CD4-positive, alpha-beta memory T cell (primary cell): ENCODE measurements at regions of chr9 and their contacts with region 1.

Region 1: DNA sequence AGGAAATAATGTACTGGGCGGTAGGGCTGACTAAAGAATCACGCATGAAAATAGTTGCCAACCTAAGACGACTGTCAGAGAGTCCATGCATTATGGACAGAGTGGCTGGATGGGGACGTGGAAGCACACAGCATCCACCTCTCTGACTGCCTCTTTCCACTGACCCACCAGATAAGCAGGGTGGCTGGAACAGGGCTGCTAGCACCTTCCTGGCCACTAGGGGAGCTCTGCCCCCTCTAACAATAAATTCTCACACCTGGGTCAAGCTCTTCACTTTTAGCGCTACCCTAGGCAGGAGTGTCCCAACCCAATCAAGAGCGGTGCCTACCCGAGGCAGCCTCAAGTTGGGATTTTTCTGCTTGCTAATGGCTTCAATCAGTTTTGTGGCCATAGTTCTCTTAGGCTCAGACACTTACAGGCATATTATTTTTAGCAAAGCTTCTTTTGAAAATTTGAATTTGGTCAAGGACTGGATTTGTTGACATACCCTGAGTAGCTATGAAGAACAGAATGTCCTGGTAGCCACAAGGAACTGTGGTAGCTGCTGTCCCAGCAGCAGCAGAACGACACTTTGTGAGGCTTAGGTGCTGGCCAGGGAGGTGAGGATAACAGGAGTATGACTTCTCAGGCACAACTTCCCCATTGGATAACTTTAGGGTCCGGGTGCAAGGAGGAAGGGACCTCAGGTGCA is 6.9 kb upstream of the TPM2 start:
- DNase-seq: peak in 4 of 5 donors; percentile 42 to 61 (median 52)
- H3K4me3 ChIP-seq: no peak overlapping the region
- H3K4me3 Mint-ChIP-seq: no peak overlapping the region
- H3K27ac ChIP-seq: no peak overlapping the region
- H3K27ac Mint-ChIP-seq: peak overlapping the region; percentile 35 to 89 (median 79)
- H3K4me1 ChIP-seq: peaks cover 9% of the 10 kb centered on the region
- H3K4me1 Mint-ChIP-seq: peaks cover 7 to 15% (median 12%) of the 10 kb centered on the region in 4 donors
- H3K27me3 ChIP-seq: no peaks in the 10 kb centered on the region
- H3K27me3 Mint-ChIP-seq: no peaks in the 10 kb centered on the region

Region 2: GRCh38 chr9:35611230-35611797 is 85.4 kb before region 1 on chr9:
- CTCF ChIA-PET with region 1: interaction called, 85 read pairs
- POLR2A ChIA-PET with region 1: interaction called, 7 read pairs
- intact Hi-C with region 1: loop called (anchors 2 kb)
- DNase-seq: peak; percentile 45 to 63 (median 49)
- H3K4me3 ChIP-seq: no peak overlapping the region
- H3K4me3 Mint-ChIP-seq: peak overlapping the region in 1 of 8 donors; percentile 26
- H3K27ac ChIP-seq: no peak overlapping the region
- H3K27ac Mint-ChIP-seq: peak overlapping the region in 5 of 7 donors; percentile 4 to 83 (median 59)
- H3K4me1 ChIP-seq: peaks cover 19% of the 10 kb centered on the region
- H3K4me1 Mint-ChIP-seq: peaks cover 13 to 43% (median 20%) of the 10 kb centered on the region in 4 donors
- H3K27me3 ChIP-seq: no peaks in the 10 kb centered on the region
- H3K27me3 Mint-ChIP-seq: no peaks in the 10 kb centered on the region

Region 3: GRCh38 chr9:35646533-35647265 is 50.0 kb before region 1 on chr9:
- CTCF ChIA-PET with region 1: interaction called, 145 read pairs
- POLR2A ChIA-PET with region 1: interaction called, 159 read pairs
- intact Hi-C with region 1: loop called (anchors 1 kb)
- DNase-seq: peak; percentile 91 to 95 (median 91)
- H3K4me3 ChIP-seq: peak overlapping the region; percentile 78 to 96
- H3K4me3 Mint-ChIP-seq: peak overlapping the region; percentile 93 to 98 (median 94)
- H3K27ac ChIP-seq: peak overlapping the region; percentile 88
- H3K27ac Mint-ChIP-seq: peak overlapping the region; percentile 89 to 99 (median 97)
- H3K4me1 ChIP-seq: peaks cover 56% of the 10 kb centered on the region
- H3K4me1 Mint-ChIP-seq: peaks cover 29 to 87% (median 47%) of the 10 kb centered on the region in 4 donors
- H3K27me3 ChIP-seq: no peaks in the 10 kb centered on the region
- H3K27me3 Mint-ChIP-seq: no peaks in the 10 kb centered on the region

Region 4: DNA sequence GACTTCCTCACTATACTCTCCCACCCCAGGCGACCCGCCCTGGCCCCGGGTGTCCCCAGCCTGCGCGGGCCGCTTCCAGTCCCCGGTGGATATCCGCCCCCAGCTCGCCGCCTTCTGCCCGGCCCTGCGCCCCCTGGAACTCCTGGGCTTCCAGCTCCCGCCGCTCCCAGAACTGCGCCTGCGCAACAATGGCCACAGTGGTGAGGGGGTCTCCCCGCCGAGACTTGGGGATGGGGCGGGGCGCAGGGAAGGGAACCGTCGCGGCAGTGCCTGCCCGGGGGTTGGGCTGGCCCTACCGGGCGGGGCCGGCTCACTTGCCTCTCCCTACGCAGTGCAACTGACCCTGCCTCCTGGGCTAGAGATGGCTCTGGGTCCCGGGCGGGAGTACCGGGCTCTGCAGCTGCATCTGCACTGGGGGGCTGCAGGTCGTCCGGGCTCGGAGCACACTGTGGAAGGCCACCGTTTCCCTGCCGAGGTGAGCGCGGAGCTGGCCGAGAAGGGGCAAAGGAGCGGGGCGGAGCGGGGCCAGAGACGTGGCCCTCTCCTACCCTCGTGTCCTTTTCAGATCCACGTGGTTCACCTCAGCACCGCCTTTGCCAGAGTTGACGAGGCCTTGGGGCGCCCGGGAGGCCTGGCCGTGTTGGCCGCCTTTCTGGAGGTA is 20.8 kb before region 1 on chr9:
- CTCF ChIA-PET with region 1: interaction called, 20 read pairs
- POLR2A ChIA-PET with region 1: interaction called, 4 read pairs
- intact Hi-C with region 1: no loop called
- DNase-seq: no peak
- H3K4me3 ChIP-seq: peak overlapping the region in 1 of 2 donors; percentile 41
- H3K4me3 Mint-ChIP-seq: peak overlapping the region; percentile 65 to 91 (median 77)
- H3K27ac ChIP-seq: no peak overlapping the region
- H3K27ac Mint-ChIP-seq: peak overlapping the region in 1 of 7 donors; percentile 17
- H3K4me1 ChIP-seq: peaks cover 12% of the 10 kb centered on the region
- H3K4me1 Mint-ChIP-seq: peaks cover 12 to 15% (median 14%) of the 10 kb centered on the region in 4 donors
- H3K27me3 ChIP-seq: no peaks in the 10 kb centered on the region
- H3K27me3 Mint-ChIP-seq: peaks cover 3 to 6% of the 10 kb centered on the region in 2 donors

Region 5: GRCh38 chr9:35716230-35716629 is 19.6 kb after region 1 on chr9:
- CTCF ChIA-PET with region 1: interaction called, 76 read pairs
- POLR2A ChIA-PET with region 1: no interaction called
- intact Hi-C with region 1: no loop called
- DNase-seq: no peak
- H3K4me3 ChIP-seq: no peak overlapping the region
- H3K4me3 Mint-ChIP-seq: no peak overlapping the region
- H3K27ac ChIP-seq: no peak overlapping the region
- H3K27ac Mint-ChIP-seq: peak overlapping the region in 5 of 7 donors; percentile 15 to 94 (median 52)
- H3K4me1 ChIP-seq: no peaks in the 10 kb centered on the region
- H3K4me1 Mint-ChIP-seq: no peaks in the 10 kb centered on the region
- H3K27me3 ChIP-seq: no peaks in the 10 kb centered on the region
- H3K27me3 Mint-ChIP-seq: no peaks in the 10 kb centered on the region

Region 6: GRCh38 chr9:35756275-35757225 is 59.9 kb after region 1 on chr9:
- CTCF ChIA-PET with region 1: interaction called, 32 read pairs
- POLR2A ChIA-PET with region 1: no interaction called
- intact Hi-C with region 1: no loop called
- DNase-seq: peak; percentile 68 to 80 (median 71)
- H3K4me3 ChIP-seq: peak overlapping the region; percentile 62 to 90
- H3K4me3 Mint-ChIP-seq: peak overlapping the region; percentile 97 to 100 (median 98)
- H3K27ac ChIP-seq: peak overlapping the region; percentile 70
- H3K27ac Mint-ChIP-seq: peak overlapping the region; percentile 81 to 99 (median 98)
- H3K4me1 ChIP-seq: peaks cover 22% of the 10 kb centered on the region
- H3K4me1 Mint-ChIP-seq: peaks cover 24 to 67% (median 49%) of the 10 kb centered on the region in 4 donors
- H3K27me3 ChIP-seq: no peaks in the 10 kb centered on the region
- H3K27me3 Mint-ChIP-seq: no peaks in the 10 kb centered on the region